AG04449 (cell line): ENCODE measurements at regions of chr4 and their contacts with region 1.

Region 1: DNA sequence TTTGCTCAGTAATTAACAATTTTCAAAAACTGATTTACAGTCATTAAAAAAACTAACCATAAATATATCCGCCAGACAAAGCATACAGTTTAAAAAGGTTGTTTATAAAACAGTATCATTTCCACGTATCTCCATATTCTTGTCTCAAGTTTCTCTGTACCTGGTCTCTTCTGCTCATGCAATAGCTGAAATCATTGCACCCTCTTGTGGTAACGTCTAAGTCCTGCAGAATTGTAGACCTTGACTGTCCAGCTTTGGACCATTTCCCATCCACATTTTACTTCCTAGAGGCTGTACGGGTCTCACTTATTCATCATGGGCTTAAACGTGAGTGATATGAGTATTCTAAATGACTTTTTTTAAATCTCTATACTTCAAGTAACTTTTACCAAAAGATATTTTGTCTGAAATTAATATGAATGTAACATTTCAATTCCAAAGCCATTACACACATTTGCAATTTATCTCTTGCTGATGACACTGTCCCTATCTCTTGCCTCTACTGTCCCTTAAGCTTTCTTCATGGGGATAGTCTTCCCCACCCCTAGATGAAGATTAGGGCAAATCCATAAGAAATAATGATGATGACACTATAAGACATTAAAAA is 118.5 kb downstream of the BTC start:
- DNase-seq: peak; percentile 16
- H3K4me3 ChIP-seq: no peak overlapping the region
- CTCF ChIP-seq: peak; percentile 79

Region 2: GRCh38 chr4:74109116-74109869 is 566.5 kb before region 1 on chr4:
- CTCF ChIA-PET with region 1: no interaction called
- POLR2A ChIA-PET with region 1: no interaction called
- DNase-seq: peak; percentile 94
- H3K4me3 ChIP-seq: no peak overlapping the region
- CTCF ChIP-seq: no peak

Region 3: DNA sequence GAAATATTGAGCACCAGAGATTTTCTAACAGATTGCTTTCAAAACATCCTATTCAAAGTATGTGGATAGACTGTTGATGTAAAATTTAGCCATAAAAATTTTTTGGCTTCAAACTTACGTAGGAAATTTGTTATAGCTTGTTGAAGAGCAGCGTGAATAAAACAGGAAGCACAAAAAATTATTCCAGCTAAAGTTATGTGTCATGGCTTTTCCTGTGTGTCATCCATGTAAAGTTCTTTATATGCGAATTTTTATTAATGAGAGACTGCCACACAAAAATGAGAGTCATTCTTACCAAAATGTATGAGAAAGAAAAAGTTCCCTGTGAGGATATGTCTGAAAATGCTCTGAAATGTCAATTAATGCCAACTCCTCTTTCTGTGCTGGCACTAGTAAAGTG is 348.0 kb before region 1 on chr4:
- CTCF ChIA-PET with region 1: interaction called, 404 read pairs
- POLR2A ChIA-PET with region 1: no interaction called
- DNase-seq: no peak
- H3K4me3 ChIP-seq: no peak overlapping the region
- CTCF ChIP-seq: no peak

Region 4: DNA sequence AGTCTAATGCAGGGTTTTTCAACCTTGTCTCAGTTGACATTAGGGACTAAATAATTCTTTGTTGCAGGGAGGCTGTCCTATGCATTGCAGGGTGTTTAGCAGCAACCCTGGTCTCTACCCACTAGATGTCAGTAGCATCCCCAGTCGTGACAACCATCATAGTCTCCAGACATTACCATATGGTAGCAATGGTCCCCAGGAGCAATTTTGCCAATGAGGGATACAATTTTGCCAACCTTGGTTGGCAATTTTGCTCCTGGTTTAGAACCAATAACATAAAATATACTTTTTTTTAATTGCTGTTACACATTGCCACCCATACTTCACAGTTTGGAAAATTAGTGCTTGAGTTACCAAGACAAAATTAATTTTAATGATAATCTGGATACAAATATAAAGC is 304.9 kb before region 1 on chr4:
- CTCF ChIA-PET with region 1: interaction called, 142 read pairs
- POLR2A ChIA-PET with region 1: no interaction called
- DNase-seq: no peak
- H3K4me3 ChIP-seq: no peak overlapping the region
- CTCF ChIP-seq: peak; percentile 79

Region 5: GRCh38 chr4:74531963-74532794 is 143.6 kb before region 1 on chr4:
- CTCF ChIA-PET with region 1: interaction called, 109 read pairs
- POLR2A ChIA-PET with region 1: no interaction called
- DNase-seq: peak; percentile 47
- H3K4me3 ChIP-seq: no peak overlapping the region
- CTCF ChIP-seq: peak; percentile 67

Region 6: GRCh38 chr4:74543231-74543670 is 132.5 kb before region 1 on chr4:
- CTCF ChIA-PET with region 1: interaction called, 82 read pairs
- POLR2A ChIA-PET with region 1: no interaction called
- DNase-seq: no peak
- H3K4me3 ChIP-seq: no peak overlapping the region
- CTCF ChIP-seq: no peak

Region 7: GRCh38 chr4:74665377-74665776 is 10.4 kb before region 1 on chr4:
- CTCF ChIA-PET with region 1: interaction called, 56 read pairs
- POLR2A ChIA-PET with region 1: no interaction called
- DNase-seq: no peak
- H3K4me3 ChIP-seq: no peak overlapping the region
- CTCF ChIP-seq: no peak